CD8-positive, alpha-beta T cell (primary cell): ENCODE measurements at regions of chr20 and their contacts with region 1.

Region 1: GRCh38 chr20:44642203-44643153 is 9.0 kb downstream of the ADA start:
- DNase-seq: peak in 7 of 9 experiments; percentile 20 to 74 (median 45)
- ATAC-seq: peak; percentile 27
- H3K4me3 ChIP-seq: peak overlapping the region; percentile 14 to 32
- H3K4me3 Mint-ChIP-seq: peak overlapping the region; percentile 51
- H3K27ac ChIP-seq: peak overlapping the region; percentile 51 to 93
- H3K27ac Mint-ChIP-seq: peak overlapping the region; percentile 93
- H3K4me1 ChIP-seq: peaks cover 65% of the 10 kb centered on the region
- H3K4me1 Mint-ChIP-seq: peaks cover 69% of the 10 kb centered on the region
- H3K27me3 ChIP-seq: no peaks in the 10 kb centered on the region
- H3K27me3 Mint-ChIP-seq: no peaks in the 10 kb centered on the region
- CTCF ChIP-seq: peak; percentile 44

Region 2: GRCh38 chr20:44561876-44562275 is 80.6 kb before region 1 on chr20:
- CTCF ChIA-PET with region 1: no interaction called
- POLR2A ChIA-PET with region 1: no interaction called
- intact Hi-C with region 1: loop called in 1 of 2 experiments (anchors 2 kb)
- DNase-seq: no peak
- ATAC-seq: no peak
- H3K4me3 ChIP-seq: no peak overlapping the region
- H3K4me3 Mint-ChIP-seq: no peak overlapping the region
- H3K27ac ChIP-seq: no peak overlapping the region
- H3K27ac Mint-ChIP-seq: no peak overlapping the region
- H3K4me1 ChIP-seq: no peaks in the 10 kb centered on the region
- H3K4me1 Mint-ChIP-seq: peaks cover 2% of the 10 kb centered on the region
- H3K27me3 ChIP-seq: no peaks in the 10 kb centered on the region
- H3K27me3 Mint-ChIP-seq: peaks cover 6% of the 10 kb centered on the region
- CTCF ChIP-seq: no peak

Region 3: GRCh38 chr20:44615169-44615791 is 27.2 kb before region 1 on chr20:
- CTCF ChIA-PET with region 1: interaction called, 19 read pairs
- POLR2A ChIA-PET with region 1: interaction called, 6 read pairs
- intact Hi-C with region 1: loop called (anchors 1 to 2 kb)
- DNase-seq: peak in 5 of 9 experiments; percentile 22 to 61 (median 31)
- ATAC-seq: no peak
- H3K4me3 ChIP-seq: peak overlapping the region in 1 of 2 experiments; percentile 2
- H3K4me3 Mint-ChIP-seq: peak overlapping the region; percentile 61
- H3K27ac ChIP-seq: peak overlapping the region; percentile 53 to 75
- H3K27ac Mint-ChIP-seq: peak overlapping the region; percentile 98
- H3K4me1 ChIP-seq: peaks cover 82% of the 10 kb centered on the region
- H3K4me1 Mint-ChIP-seq: peaks cover 76% of the 10 kb centered on the region
- H3K27me3 ChIP-seq: no peaks in the 10 kb centered on the region
- H3K27me3 Mint-ChIP-seq: no peaks in the 10 kb centered on the region
- CTCF ChIP-seq: no peak

Region 4: GRCh38 chr20:44750081-44750805 is 107.8 kb after region 1 on chr20:
- CTCF ChIA-PET with region 1: no interaction called
- POLR2A ChIA-PET with region 1: no interaction called
- intact Hi-C with region 1: no loop called
- DNase-seq: no peak
- ATAC-seq: no peak
- H3K4me3 ChIP-seq: no peak overlapping the region
- H3K4me3 Mint-ChIP-seq: no peak overlapping the region
- H3K27ac ChIP-seq: no peak overlapping the region
- H3K27ac Mint-ChIP-seq: no peak overlapping the region
- H3K4me1 ChIP-seq: peaks cover 8% of the 10 kb centered on the region
- H3K4me1 Mint-ChIP-seq: peaks cover 9% of the 10 kb centered on the region
- H3K27me3 ChIP-seq: peaks cover 3 to 6% of the 10 kb centered on the region in 2 experiments
- H3K27me3 Mint-ChIP-seq: peaks cover 28% of the 10 kb centered on the region
- CTCF ChIP-seq: no peak